WTC11 (cell line): ENCODE measurements at regions of chr1 and their contacts with region 1.

Region 1: DNA sequence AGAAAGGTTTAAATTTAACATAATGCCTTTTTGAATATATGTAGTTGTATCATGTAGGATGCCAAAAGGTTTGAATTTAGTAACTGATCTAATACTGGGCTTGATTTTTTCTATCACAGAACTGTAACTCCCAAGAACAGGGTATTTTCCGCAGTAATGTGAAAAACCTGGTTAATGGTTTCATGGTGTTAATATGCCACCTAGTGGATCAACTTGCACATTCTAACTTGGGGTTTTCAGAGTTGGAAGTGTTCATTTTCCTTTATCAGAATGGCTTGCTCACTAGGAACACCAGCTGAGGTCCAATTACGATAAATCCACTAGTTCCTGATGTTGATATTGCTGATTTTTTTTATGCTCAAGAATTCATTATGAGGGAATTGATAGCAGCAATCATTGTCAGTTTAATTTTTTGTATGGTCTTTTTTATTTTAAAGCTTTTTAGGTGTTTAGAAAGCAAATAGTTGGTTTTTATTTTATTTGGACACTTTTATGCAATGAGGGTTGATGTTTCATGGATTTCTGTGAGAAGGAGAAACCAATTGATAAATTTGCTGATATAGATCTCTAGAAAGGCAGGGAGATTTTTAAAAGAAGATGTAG is 157.2 kb downstream of the PLA2G4A start:
- DNase-seq: no peak
- ATAC-seq: peak; percentile 76
- H3K4me3 Mint-ChIP-seq: no peak overlapping the region
- H3K27ac Mint-ChIP-seq: no peak overlapping the region
- H3K4me1 Mint-ChIP-seq: peaks cover 18% of the 10 kb centered on the region
- H3K27me3 Mint-ChIP-seq: no peaks in the 10 kb centered on the region
- CTCF ChIP-seq: peak; percentile 50

Region 2: GRCh38 chr1:186482661-186483255 is 503.2 kb before region 1 on chr1:
- CTCF ChIA-PET with region 1: interaction called, 11 read pairs
- POLR2A ChIA-PET with region 1: no interaction called
- DNase-seq: peak; percentile 81
- ATAC-seq: peak; percentile 94
- H3K4me3 Mint-ChIP-seq: no peak overlapping the region
- H3K27ac Mint-ChIP-seq: no peak overlapping the region
- H3K4me1 Mint-ChIP-seq: no peaks in the 10 kb centered on the region
- H3K27me3 Mint-ChIP-seq: no peaks in the 10 kb centered on the region
- CTCF ChIP-seq: peak; percentile 65

Region 3: DNA sequence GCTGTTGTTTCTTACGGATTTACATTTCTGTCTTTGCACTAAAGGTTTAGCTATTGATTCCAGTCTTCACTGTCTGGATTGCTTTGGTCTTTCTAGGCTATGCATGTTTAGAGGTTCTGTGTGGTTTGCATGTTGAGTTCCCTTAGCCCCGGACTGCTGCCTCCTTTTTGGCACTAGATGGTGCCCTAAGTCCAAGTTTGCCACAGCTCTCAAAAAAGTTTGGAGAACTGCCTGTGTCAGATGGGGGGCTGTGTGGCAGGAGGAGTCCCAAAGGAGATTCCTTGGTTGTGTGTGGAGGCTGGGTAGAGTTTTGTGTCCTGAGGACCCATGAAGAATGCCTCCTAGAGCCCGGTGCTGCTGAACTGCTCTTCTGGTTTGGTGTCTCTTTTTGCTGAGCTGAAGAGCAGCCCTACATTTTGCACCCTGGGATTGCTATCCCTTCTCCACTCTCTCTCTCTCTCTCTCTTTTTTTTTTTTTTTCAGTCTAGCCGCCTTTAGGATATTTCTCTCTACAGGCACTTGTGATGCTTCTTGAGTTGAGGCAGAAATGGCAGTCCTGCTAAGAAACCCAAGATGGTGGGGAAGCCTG is 380.1 kb before region 1 on chr1:
- CTCF ChIA-PET with region 1: interaction called, 16 read pairs
- POLR2A ChIA-PET with region 1: no interaction called
- DNase-seq: peak; percentile 69
- ATAC-seq: peak; percentile 98
- H3K4me3 Mint-ChIP-seq: no peak overlapping the region
- H3K27ac Mint-ChIP-seq: no peak overlapping the region
- H3K4me1 Mint-ChIP-seq: peaks cover 6% of the 10 kb centered on the region
- H3K27me3 Mint-ChIP-seq: no peaks in the 10 kb centered on the region
- CTCF ChIP-seq: peak; percentile 59

Region 4: GRCh38 chr1:186996816-186997215 is 10.8 kb after region 1 on chr1:
- CTCF ChIA-PET with region 1: no interaction called
- POLR2A ChIA-PET with region 1: no interaction called
- DNase-seq: no peak
- ATAC-seq: no peak
- H3K4me3 Mint-ChIP-seq: no peak overlapping the region
- H3K27ac Mint-ChIP-seq: no peak overlapping the region
- H3K4me1 Mint-ChIP-seq: peaks cover 20% of the 10 kb centered on the region
- H3K27me3 Mint-ChIP-seq: no peaks in the 10 kb centered on the region
- CTCF ChIP-seq: no peak